Ovary (tissue), 10 donors: ENCODE measurements at regions of chr13 and their contacts with region 1.

Region 1: GRCh38 chr13:32031025-32031814 is at the start of gene FRY:
- DNase-seq: peak; percentile 47 to 71 (median 65)
- H3K4me3 ChIP-seq: peak within 1 kb of the TSS; percentile 77
- H3K27ac ChIP-seq: peak within 1 kb of the TSS; percentile 69 to 91
- H3K4me1 ChIP-seq: no peaks in the 10 kb centered on the region
- H3K27me3 ChIP-seq: no peaks in the 10 kb centered on the region
- CTCF ChIP-seq: peak in 1 of 3 donors; percentile 25
- EP300 ChIP-seq: no peak
- POLR2A ChIP-seq: no peak
- total RNA-seq, gene FRY: 11.6 to 36.7 (median 19.0) TPM

Region 2: DNA sequence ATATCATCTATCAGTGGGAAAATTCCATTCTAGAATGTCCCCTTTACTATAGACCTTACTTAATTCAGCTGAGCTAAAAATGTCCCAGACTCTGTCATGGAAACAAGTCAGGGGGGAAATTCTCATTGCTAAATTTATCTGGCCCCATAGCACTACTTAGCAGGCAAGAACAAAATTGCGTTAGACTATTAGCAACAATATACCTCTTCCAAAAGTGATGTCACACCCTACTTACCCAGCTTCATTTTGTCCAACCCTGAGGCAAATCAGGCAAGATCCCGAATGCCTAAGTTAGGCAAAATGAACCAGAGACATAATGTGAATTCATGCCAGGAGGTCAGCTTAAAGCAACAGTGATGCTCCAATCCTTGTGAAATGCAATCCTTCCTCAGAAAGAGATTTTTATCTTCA is 94.0 kb after region 1 on chr13:
- intact Hi-C with region 1: loop called in 1 of 4 experiments (anchors 2 kb)
- DNase-seq: no peak
- H3K4me3 ChIP-seq: no peak overlapping the region
- H3K27ac ChIP-seq: no peak overlapping the region
- H3K4me1 ChIP-seq: no peaks in the 10 kb centered on the region
- H3K27me3 ChIP-seq: no peaks in the 10 kb centered on the region
- CTCF ChIP-seq: no peak
- EP300 ChIP-seq: peak; percentile 49
- POLR2A ChIP-seq: no peak

Region 3: DNA sequence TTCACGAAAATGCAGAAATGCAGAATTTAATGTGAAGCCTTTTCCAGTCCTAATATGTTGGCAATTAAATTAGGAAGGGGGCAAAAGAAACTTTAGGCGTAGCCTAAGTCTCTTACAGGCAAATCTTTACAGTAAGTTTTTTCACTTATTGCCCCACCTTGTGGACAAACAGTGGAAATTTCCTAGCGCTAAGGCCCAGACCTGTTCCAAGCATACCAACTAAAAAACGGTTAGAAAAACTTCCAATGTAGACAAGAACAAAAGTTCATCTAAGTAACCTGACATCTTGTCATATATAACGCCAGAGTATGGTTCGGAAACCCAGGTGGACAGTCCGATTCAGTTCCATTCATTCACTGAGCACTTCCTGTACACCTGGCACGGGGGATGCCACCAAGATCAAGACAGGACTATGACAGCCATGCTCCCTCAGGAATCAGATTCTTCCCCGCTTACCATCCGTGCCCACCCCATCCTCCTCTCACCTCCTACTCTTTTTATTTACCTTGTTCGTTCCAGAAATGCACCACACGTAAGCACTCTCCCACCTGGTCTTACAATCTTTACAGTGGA is 279.0 kb after region 1 on chr13:
- intact Hi-C with region 1: loop called in 2 of 4 experiments (anchors 5 to 10 kb)
- DNase-seq: no peak
- H3K4me3 ChIP-seq: peak overlapping the region; percentile 11
- H3K27ac ChIP-seq: no peak overlapping the region
- H3K4me1 ChIP-seq: peaks cover 5% of the 10 kb centered on the region
- H3K27me3 ChIP-seq: no peaks in the 10 kb centered on the region
- CTCF ChIP-seq: peak; percentile 55 to 75 (median 69)
- EP300 ChIP-seq: no peak
- POLR2A ChIP-seq: no peak